B cell (primary cell): ENCODE measurements at regions of chr10 and their contacts with region 1.

Region 1: DNA sequence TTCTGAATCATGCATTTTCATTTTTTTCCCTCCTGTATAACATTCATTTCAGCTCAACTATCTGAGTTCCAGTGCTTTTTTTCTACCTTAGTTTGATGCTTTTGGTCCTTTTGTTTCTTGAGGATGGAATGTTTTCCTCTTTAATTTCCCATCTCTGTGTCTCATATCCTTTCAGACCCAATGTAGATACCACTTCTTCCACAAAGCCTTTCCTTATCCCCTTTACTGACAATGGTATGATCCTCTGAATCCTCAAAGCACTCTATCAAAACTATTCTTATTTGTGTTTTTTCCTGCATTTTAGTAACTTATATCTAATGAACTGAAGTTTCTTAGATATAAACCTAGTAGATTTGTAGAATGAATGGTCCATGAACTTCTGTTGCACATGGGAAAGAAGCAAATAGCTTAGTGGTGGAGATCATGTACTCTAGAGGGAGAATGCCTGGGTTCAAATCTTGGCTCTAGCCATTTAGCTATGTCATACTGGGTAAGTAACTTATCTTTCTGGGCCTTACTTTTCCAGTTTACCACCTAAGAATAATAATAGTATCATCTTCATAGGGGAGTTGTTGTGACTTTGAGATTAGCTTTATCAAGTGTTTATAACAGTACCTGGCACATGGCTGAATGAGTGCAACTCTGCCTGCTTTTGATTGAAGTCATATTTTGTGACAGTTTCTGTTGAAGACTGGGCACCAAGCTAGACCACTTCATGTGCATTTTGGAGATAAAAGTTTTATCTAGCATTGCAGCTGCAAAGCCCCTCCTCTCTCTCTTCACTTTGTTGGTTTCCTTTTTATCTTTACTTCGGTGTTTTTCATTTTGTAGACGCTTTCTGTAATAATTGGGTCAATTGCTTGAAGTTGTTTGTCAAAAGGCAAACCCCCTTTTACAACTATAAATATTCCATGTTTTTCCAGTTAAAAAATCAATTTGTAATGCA is 18.5 kb downstream of the STAM start:
- DNase-seq: no peak
- ATAC-seq: no peak
- H3K4me3 ChIP-seq: no peak overlapping the region
- H3K4me3 Mint-ChIP-seq: no peak overlapping the region
- H3K27ac ChIP-seq: no peak overlapping the region
- H3K27ac Mint-ChIP-seq: no peak overlapping the region
- H3K4me1 ChIP-seq: no peaks in the 10 kb centered on the region
- H3K4me1 Mint-ChIP-seq: peaks cover 22% of the 10 kb centered on the region
- H3K27me3 ChIP-seq: no peaks in the 10 kb centered on the region
- H3K27me3 Mint-ChIP-seq: no peaks in the 10 kb centered on the region
- CTCF ChIP-seq: no peak

Region 2: DNA sequence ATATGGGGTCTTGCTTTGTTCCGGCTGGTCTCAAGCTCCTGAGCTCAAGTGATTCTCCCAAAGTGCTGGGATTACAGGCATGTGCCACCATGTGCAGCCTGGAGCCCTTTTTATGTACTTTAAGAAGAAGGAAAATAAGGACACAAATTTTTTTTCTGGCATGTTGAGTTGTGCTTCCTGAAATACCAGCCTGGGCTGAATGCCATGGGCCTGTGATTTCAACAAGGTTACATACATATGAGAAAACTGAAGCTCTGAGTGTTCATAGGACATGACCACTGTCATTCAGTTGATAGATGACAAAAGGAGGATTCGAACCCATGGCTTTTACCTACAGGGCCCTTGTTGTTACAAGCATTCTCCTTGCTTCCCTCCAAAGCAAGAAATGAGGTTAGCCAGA is 244.2 kb before region 1 on chr10:
- CTCF ChIA-PET with region 1: no interaction called
- POLR2A ChIA-PET with region 1: no interaction called
- intact Hi-C with region 1: no loop called
- DNase-seq: no peak
- ATAC-seq: no peak
- H3K4me3 ChIP-seq: no peak overlapping the region
- H3K4me3 Mint-ChIP-seq: no peak overlapping the region
- H3K27ac ChIP-seq: no peak overlapping the region
- H3K27ac Mint-ChIP-seq: no peak overlapping the region
- H3K4me1 ChIP-seq: no peaks in the 10 kb centered on the region
- H3K4me1 Mint-ChIP-seq: no peaks in the 10 kb centered on the region
- H3K27me3 ChIP-seq: peaks cover 0 to 2% (median 0%) of the 10 kb centered on the region in 4 experiments
- H3K27me3 Mint-ChIP-seq: peaks cover 14% of the 10 kb centered on the region
- CTCF ChIP-seq: no peak

Region 3: DNA sequence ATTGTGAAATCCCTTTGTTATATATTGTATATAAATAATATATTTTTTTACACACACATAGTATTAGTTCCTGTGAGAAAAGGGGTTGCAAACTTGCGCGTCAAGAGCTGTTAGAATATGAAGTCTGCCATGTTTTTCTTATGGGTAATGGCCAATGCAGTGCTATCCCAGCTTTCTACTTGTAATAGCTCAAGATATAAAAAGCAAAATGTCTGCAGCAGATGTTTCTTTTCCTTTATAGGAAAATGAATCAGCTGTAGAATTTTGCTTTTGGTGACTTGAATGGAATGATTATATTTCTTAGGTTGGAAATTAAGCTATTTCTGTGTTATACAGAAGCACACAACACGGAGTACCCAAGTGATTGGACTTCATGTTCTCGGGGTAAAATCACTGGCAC is 36.2 kb after region 1 on chr10:
- CTCF ChIA-PET with region 1: no interaction called
- POLR2A ChIA-PET with region 1: no interaction called
- intact Hi-C with region 1: loop called (anchors 5 kb)
- DNase-seq: no peak
- ATAC-seq: no peak
- H3K4me3 ChIP-seq: no peak overlapping the region
- H3K4me3 Mint-ChIP-seq: no peak overlapping the region
- H3K27ac ChIP-seq: no peak overlapping the region
- H3K27ac Mint-ChIP-seq: no peak overlapping the region
- H3K4me1 ChIP-seq: no peaks in the 10 kb centered on the region
- H3K4me1 Mint-ChIP-seq: peaks cover 3% of the 10 kb centered on the region
- H3K27me3 ChIP-seq: no peaks in the 10 kb centered on the region
- H3K27me3 Mint-ChIP-seq: no peaks in the 10 kb centered on the region
- CTCF ChIP-seq: no peak

Region 4: GRCh38 chr10:17712717-17713471 is 50.4 kb after region 1 on chr10:
- CTCF ChIA-PET with region 1: no interaction called
- POLR2A ChIA-PET with region 1: no interaction called
- intact Hi-C with region 1: no loop called
- DNase-seq: no peak
- ATAC-seq: no peak
- H3K4me3 ChIP-seq: no peak overlapping the region
- H3K4me3 Mint-ChIP-seq: no peak overlapping the region
- H3K27ac ChIP-seq: no peak overlapping the region
- H3K27ac Mint-ChIP-seq: no peak overlapping the region
- H3K4me1 ChIP-seq: no peaks in the 10 kb centered on the region
- H3K4me1 Mint-ChIP-seq: no peaks in the 10 kb centered on the region
- H3K27me3 ChIP-seq: no peaks in the 10 kb centered on the region
- H3K27me3 Mint-ChIP-seq: no peaks in the 10 kb centered on the region
- CTCF ChIP-seq: no peak